ENCODE measurements at regions of chr11 and their contacts with region 1.

Region 1: GRCh38 chr11:76318744-76319384 is 62.1 kb downstream of the THAP12 start:
- DNase-seq: peak; percentile 89
- H3K4me3 Mint-ChIP-seq: no peak overlapping the region
- H3K27ac Mint-ChIP-seq: no peak overlapping the region
- H3K4me1 Mint-ChIP-seq: peaks cover 2% of the 10 kb centered on the region
- H3K27me3 Mint-ChIP-seq: peaks cover 28% of the 10 kb centered on the region

Region 2: GRCh38 chr11:75721855-75722668 is 596.8 kb before region 1 on chr11:
- CTCF ChIA-PET with region 1: no interaction called
- intact Hi-C with region 1: loop called (anchors 5 kb)
- DNase-seq: no peak
- H3K4me3 Mint-ChIP-seq: no peak overlapping the region
- H3K27ac Mint-ChIP-seq: no peak overlapping the region
- H3K4me1 Mint-ChIP-seq: no peaks in the 10 kb centered on the region
- H3K27me3 Mint-ChIP-seq: no peaks in the 10 kb centered on the region

Region 3: GRCh38 chr11:75802913-75803820 is 515.7 kb before region 1 on chr11:
- CTCF ChIA-PET with region 1: no interaction called
- intact Hi-C with region 1: loop called (anchors 5 kb)
- DNase-seq: peak; percentile 85
- H3K4me3 Mint-ChIP-seq: no peak overlapping the region
- H3K27ac Mint-ChIP-seq: no peak overlapping the region
- H3K4me1 Mint-ChIP-seq: peaks cover 12% of the 10 kb centered on the region
- H3K27me3 Mint-ChIP-seq: no peaks in the 10 kb centered on the region

Region 4: DNA sequence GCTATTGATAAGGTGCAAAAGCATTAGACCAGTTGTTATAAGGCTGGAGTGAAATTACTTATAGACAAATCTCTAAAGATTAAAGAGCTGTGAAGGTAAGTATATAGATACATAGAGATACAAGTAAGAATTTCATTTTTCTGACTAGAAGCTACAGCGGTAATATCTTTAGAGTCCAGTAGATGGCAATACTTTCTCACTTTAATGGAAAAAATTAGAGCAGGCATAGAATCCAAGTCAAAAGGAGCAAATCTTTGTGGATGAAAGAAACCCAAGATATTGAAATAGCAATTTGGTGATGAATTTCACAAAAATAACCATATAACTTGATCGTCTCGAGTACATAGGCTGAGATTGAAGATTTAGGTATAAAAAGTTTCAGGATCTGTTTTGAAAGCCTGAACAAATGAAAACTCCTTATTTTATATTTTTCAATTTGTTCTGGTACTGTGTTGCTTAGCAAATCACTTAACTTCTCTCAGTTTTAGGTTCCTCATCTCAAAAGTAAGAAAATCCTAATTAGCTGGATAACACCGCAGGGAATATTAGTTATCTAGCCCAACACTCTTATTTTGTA is 421.9 kb before region 1 on chr11:
- CTCF ChIA-PET with region 1: interaction called, 6 read pairs
- intact Hi-C with region 1: loop called (anchors 2 kb)
- DNase-seq: no peak
- H3K4me3 Mint-ChIP-seq: no peak overlapping the region
- H3K27ac Mint-ChIP-seq: no peak overlapping the region
- H3K4me1 Mint-ChIP-seq: peaks cover 23% of the 10 kb centered on the region
- H3K27me3 Mint-ChIP-seq: no peaks in the 10 kb centered on the region

Region 5: DNA sequence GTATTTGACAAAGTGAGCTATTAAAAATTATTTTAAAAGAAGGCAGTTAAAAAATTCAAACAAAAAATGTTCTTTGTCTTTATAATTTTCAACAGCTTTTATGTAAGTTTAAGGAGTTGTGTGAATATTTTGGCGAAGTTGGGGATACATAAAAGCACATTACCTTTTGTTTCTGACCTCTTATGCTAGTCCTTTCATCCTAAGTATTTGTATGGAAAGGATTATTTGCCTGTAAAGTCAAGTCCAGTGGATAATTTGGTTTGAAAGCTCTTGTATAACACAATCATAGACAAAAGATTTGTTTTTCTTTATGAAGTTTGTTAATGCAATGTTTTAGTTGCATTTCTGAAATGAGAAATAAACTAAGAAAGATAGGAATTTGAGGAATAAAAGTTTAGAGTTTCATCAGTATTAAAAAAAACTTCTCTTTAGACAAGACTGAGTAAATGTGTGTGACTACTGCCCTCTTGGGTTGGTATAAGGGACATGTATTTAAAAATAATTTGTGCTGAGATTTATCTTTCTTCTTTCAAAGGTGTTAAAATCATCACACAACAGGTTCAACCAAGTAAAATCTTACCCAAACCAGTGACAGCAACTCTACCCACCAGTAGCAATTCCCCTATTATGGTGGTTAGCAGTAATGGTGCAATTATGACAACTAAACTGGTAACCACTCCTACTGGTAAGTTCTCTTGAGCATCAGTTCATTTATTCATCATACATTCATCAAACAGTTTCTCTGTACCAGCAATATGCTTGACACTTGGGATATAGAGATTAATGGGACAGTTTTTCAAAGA is 194.2 kb after region 1 on chr11:
- CTCF ChIA-PET with region 1: no interaction called
- intact Hi-C with region 1: loop called (anchors 2 kb)
- DNase-seq: no peak
- H3K4me3 Mint-ChIP-seq: no peak overlapping the region
- H3K27ac Mint-ChIP-seq: no peak overlapping the region
- H3K4me1 Mint-ChIP-seq: no peaks in the 10 kb centered on the region
- H3K27me3 Mint-ChIP-seq: no peaks in the 10 kb centered on the region

Region 6: DNA sequence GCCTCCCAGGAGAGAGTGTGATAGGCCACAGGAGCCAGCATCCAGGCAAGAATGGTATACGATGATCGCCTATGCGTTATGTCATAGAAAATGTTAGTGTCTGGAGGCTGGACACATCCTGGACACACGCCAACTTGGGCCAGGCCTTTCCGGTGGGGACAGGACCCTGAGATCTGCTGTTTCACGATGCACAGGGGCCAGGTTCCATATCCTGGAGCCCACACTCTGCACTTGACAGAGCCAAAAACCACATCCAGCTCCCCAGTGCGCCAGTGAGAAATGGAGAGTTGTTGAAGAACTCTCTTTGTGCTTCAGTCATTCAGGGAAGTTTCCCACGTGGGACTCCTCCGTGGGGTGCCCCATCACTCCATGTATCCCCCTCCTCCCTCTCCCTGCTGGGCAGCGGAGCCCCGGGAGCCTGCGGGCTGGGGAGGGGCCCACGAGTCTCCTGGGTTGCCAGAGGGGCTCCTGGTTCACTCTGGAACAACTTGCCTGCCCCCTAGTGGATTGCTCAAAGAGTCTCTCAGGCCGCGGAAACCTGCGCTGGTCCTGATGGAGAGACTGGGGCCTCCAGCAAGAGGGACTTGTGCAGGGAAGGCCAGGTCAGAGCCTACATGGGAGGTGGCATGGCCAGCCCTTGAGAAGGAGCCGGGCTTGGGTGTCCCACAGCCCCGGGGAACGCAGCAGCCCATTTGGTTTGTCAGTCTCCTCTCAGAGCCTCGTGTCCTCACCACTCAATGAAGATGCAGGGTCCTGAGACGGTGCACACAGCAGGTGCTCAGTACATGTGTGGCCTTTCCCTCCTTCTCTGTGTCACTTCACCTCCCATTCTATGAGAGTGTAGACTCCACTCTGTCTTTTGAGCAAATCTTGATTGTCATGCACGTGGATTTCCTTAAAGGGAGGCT is 361.9 kb after region 1 on chr11:
- CTCF ChIA-PET with region 1: interaction called, 3 read pairs
- intact Hi-C with region 1: loop called (anchors 5 kb)
- DNase-seq: peak; percentile 80
- H3K4me3 Mint-ChIP-seq: no peak overlapping the region
- H3K27ac Mint-ChIP-seq: no peak overlapping the region
- H3K4me1 Mint-ChIP-seq: peaks cover 2% of the 10 kb centered on the region
- H3K27me3 Mint-ChIP-seq: peaks cover 5% of the 10 kb centered on the region